ENCODE measurements at regions of chr2 and their contacts with region 1.

Region 1: GRCh38 chr2:207869784-207870778 is 100.4 kb upstream of the FZD5 start:
- DNase-seq: peak; percentile 65
- H3K4me3 ChIP-seq: no peak overlapping the region
- CTCF ChIP-seq: no peak

Region 2: GRCh38 chr2:207914716-207915115 is 44.6 kb after region 1 on chr2:
- in situ Hi-C with region 1: loop called (anchors 5 kb)
- DNase-seq: no peak
- H3K4me3 ChIP-seq: no peak overlapping the region
- CTCF ChIP-seq: no peak